ENCODE measurements at regions of chr7 and their contacts with region 1.

Region 1: GRCh38 chr7:31000161-31000693 is 36.5 kb downstream of the GHRHR start:
- DNase-seq: peak in 1 of 2 donors; percentile 40
- ATAC-seq: peak in 6 of 8 donors; percentile 17 to 55 (median 37)
- H3K4me3 ChIP-seq: no peak overlapping the region
- H3K27ac ChIP-seq: peak overlapping the region in 5 of 10 donors; percentile 4 to 65 (median 40)
- H3K4me1 ChIP-seq: peaks cover 0 to 28% (median 4%) of the 10 kb centered on the region in 9 donors
- H3K27me3 ChIP-seq: peaks cover 0 to 2% (median 0%) of the 10 kb centered on the region in 7 donors
- CTCF ChIP-seq: no peak

Region 2: DNA sequence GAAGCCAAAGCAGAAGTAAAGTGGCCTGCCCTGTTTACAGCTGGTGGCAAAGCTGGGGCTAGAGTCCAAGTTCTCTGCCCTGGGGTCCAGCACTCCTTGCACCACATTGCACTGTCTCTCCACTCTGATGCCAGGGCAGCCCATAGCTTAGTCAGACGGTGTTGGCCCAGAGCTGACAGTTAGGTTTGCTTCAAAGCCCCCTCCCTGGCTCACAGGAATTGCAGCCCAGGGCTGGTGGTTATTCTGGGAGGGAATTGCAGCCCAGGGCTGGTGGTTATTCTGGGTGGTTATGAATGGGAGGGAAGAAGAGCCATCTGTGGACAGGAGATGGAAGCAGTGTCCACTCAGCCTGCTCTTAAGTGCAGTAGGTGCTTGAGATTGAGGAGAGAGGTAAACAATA is 1099.5 kb before region 1 on chr7:
- intact Hi-C with region 1: loop called in 1 of 10 experiments (anchors 5 kb)
- DNase-seq: no peak
- ATAC-seq: peak in 2 of 8 donors; percentile 30 to 49
- H3K4me3 ChIP-seq: no peak overlapping the region
- H3K27ac ChIP-seq: no peak overlapping the region
- H3K4me1 ChIP-seq: no peaks in the 10 kb centered on the region
- H3K27me3 ChIP-seq: no peaks in the 10 kb centered on the region
- CTCF ChIP-seq: no peak

Region 3: GRCh38 chr7:31114593-31115343 is 114.5 kb after region 1 on chr7:
- intact Hi-C with region 1: loop called in 1 of 10 experiments (anchors 5 kb)
- DNase-seq: no peak
- ATAC-seq: peak in 2 of 8 donors; percentile 55 to 58
- H3K4me3 ChIP-seq: no peak overlapping the region
- H3K27ac ChIP-seq: no peak overlapping the region
- H3K4me1 ChIP-seq: no peaks in the 10 kb centered on the region
- H3K27me3 ChIP-seq: no peaks in the 10 kb centered on the region
- CTCF ChIP-seq: no peak